ENCODE measurements at regions of chr21 and their contacts with region 1.

Region 1: DNA sequence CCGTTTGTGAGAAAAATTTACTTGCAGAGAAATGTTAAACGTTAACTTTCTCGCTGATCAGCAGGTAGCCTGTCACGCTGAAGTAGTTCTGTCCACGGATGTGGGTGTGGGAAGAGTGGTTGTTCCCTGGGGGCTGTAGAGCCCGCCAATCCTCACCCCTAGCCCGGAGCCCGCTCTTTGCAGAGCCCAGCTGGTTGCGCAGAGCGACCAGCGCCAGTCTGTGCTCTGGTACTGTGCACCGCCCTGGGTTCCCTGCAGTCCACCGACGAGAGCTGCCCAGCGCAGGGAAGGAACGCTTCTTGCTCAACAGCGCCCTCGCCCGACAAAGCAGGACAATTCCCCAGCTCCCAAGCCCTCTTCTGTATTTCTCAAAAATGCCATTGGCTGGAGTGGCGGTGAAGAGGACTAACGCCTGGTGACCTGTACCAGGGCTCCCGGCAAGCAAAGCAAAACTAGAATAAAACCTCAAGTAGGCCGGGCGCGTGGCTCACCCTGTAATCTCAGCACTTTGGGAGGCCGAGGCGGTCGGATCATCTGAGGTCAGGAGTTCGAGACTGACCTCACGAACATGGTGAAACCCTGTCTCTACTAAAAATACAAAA is 3.3 kb downstream of the RIPPLY3 start:
- DNase-seq: peak; percentile 86
- ATAC-seq: peak; percentile 93
- H3K4me3 Mint-ChIP-seq: peak overlapping the region; percentile 65
- H3K27ac Mint-ChIP-seq: no peak overlapping the region
- H3K4me1 Mint-ChIP-seq: peaks cover 26% of the 10 kb centered on the region
- H3K27me3 Mint-ChIP-seq: peaks cover 51% of the 10 kb centered on the region

Region 2: DNA sequence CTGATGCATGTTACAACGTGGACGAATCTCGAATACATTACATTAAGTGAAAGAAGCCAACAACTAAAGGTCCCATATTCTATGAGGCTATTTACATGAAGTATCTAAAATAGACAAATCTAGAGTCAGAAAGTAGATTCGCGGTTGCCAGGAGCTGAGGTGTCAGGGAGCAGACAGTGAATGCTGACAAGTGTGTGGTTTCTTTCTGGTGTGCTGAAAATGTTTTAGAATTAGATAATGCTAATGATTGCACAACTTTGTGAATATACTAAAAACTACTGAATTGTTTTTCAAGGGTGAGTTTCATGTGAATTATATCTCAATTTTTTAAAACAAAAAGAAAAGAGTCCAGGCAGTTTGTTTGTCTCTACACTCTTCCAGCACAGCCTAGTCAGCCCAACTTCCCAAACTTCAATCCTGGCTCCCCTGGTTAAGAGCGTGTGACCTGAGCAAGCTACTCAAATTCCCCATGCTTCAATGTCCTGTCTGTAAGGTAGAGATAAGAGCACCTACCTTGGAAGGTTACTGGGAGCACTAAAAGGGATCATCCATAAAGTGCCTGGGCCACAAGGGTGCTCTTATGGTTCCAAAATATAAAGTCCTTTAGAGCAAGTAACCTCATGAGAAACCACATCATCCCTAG is 64.2 kb before region 1 on chr21:
- CTCF ChIA-PET with region 1: interaction called, 14 read pairs
- DNase-seq: no peak
- ATAC-seq: no peak
- H3K4me3 Mint-ChIP-seq: no peak overlapping the region
- H3K27ac Mint-ChIP-seq: no peak overlapping the region
- H3K4me1 Mint-ChIP-seq: no peaks in the 10 kb centered on the region
- H3K27me3 Mint-ChIP-seq: no peaks in the 10 kb centered on the region

Region 3: GRCh38 chr21:36966066-36966820 is 43.6 kb before region 1 on chr21 and contains the start of gene HLCS:
- CTCF ChIA-PET with region 1: interaction called, 12 read pairs
- DNase-seq: peak; percentile 83
- ATAC-seq: peak; percentile 90
- H3K4me3 Mint-ChIP-seq: peak within 1 kb of the TSS; percentile 75
- H3K27ac Mint-ChIP-seq: peak within 1 kb of the TSS; percentile 81
- H3K4me1 Mint-ChIP-seq: peaks cover 21% of the 10 kb centered on the region
- H3K27me3 Mint-ChIP-seq: no peaks in the 10 kb centered on the region
- total RNA-seq, gene HLCS: 14.2 to 16.2 TPM